PC-3 (cell line): ENCODE measurements at regions of chr3 and their contacts with region 1.

Region 1: DNA sequence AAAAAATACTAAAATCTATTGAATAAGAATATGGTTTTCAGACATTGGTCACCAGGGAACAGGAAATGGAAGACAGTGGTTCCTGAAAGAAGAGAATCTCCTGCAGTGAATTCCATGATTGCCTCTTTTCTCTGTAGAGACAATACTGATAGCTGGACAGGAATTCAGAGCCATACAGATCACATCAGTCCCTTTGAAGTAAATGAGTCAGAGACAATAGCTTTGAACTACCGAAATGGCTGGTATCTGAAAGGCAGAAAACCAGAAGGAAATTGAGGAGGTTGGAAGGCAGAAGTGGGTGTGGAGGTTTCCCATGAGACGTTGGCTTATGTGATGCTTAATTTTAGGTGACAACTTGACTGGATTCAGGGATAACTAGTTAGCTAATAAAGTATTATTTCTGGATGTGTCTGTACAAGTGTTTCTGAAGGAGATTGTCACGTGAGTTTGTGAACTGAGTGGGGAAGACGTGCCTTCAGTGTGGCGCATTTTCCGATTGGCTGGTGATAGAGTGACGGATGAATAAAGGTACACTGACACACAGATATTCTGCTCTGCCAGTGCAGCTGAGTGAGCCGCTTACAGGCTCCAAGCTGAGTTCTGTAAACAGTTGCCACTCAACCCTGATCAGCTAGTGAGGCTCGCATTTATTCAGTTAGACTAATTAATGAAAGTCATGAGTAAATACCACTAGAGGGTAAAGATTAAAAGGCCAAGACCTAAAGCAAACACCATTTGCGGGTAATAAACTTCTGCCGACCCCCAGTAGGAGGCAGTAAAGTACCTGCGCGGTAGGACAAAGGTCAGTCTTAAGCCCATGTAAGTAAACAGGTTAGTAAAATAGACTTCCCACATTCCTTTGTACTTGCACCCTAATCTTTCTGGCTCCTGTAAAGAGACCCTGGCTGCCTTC is 1298.6 kb downstream of the SI start:
- DNase-seq: no peak
- ATAC-seq: no peak
- H3K4me3 ChIP-seq: no peak overlapping the region
- H3K27ac ChIP-seq: no peak overlapping the region
- H3K4me1 ChIP-seq: peaks cover 15% of the 10 kb centered on the region
- H3K27me3 ChIP-seq: no peaks in the 10 kb centered on the region
- CTCF ChIP-seq: 0 out of 2 replicates have a peak, but pooled peaks have one; percentile 20

Region 2: DNA sequence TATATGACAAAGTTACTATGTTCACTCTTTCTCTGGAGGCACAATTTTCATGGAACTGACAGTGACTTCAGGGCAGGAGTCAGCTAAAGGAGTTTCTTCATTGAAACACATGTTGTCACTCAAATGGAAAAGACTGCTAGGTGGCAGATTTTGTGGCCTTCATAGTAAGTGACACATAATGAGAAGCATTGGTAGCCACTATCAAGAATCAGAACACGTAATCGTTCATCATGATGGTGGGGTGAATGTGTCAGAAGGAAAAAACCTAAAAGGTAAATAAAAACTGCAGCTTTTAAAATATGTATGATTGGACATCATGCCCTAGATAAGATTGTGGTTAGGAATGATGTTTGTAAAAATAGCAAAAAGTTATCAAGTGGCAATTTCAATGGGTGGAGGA is 192.3 kb before region 1 on chr3:
- CTCF ChIA-PET with region 1: no interaction called
- POLR2A ChIA-PET with region 1: no interaction called
- intact Hi-C with region 1: loop called (anchors 10 kb)
- DNase-seq: peak; percentile 95
- ATAC-seq: peak; percentile 95
- H3K4me3 ChIP-seq: no peak overlapping the region; the same call in 1 of the 2 replicates
- H3K27ac ChIP-seq: peak overlapping the region; percentile 63
- H3K4me1 ChIP-seq: peaks cover 23% of the 10 kb centered on the region
- H3K27me3 ChIP-seq: no peaks in the 10 kb centered on the region
- CTCF ChIP-seq: no peak